PC-9 (cell line): ENCODE measurements at regions of chrX and their contacts with region 1.

Region 1: DNA sequence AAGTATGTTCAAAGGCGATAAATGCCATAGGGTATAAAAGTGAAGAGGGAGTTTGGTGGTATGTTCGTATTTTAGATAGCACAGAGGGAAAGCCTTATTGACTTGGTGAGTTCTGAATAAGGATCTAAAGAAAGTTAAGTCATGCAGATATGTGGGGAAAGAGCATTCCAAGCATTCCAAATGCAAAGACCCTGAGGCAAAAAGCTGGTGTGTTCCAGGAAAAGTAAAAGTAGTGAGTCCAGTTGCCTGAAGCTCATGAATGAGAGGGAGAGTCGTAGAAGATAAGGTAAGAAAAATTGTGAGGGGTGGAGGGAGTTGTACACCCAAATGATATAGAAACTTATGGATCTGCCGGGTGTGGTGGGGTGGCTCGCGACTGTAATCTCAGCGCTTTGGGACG is 426.7 kb downstream of the RPA4 start:
- DNase-seq: peak; percentile 46 to 71
- H3K4me3 ChIP-seq: no peak overlapping the region
- H3K27ac ChIP-seq: no peak overlapping the region
- H3K4me1 ChIP-seq: peaks cover 13% of the 10 kb centered on the region
- H3K27me3 ChIP-seq: no peaks in the 10 kb centered on the region
- CTCF ChIP-seq: no peak

Region 2: GRCh38 chrX:96979766-96980165 is 330.6 kb before region 1 on chrX:
- CTCF ChIA-PET with region 1: no interaction called
- POLR2A ChIA-PET with region 1: no interaction called
- intact Hi-C with region 1: no loop called
- DNase-seq: no peak
- H3K4me3 ChIP-seq: no peak overlapping the region
- H3K27ac ChIP-seq: no peak overlapping the region
- H3K4me1 ChIP-seq: no peaks in the 10 kb centered on the region
- H3K27me3 ChIP-seq: no peaks in the 10 kb centered on the region
- CTCF ChIP-seq: no peak

Region 3: DNA sequence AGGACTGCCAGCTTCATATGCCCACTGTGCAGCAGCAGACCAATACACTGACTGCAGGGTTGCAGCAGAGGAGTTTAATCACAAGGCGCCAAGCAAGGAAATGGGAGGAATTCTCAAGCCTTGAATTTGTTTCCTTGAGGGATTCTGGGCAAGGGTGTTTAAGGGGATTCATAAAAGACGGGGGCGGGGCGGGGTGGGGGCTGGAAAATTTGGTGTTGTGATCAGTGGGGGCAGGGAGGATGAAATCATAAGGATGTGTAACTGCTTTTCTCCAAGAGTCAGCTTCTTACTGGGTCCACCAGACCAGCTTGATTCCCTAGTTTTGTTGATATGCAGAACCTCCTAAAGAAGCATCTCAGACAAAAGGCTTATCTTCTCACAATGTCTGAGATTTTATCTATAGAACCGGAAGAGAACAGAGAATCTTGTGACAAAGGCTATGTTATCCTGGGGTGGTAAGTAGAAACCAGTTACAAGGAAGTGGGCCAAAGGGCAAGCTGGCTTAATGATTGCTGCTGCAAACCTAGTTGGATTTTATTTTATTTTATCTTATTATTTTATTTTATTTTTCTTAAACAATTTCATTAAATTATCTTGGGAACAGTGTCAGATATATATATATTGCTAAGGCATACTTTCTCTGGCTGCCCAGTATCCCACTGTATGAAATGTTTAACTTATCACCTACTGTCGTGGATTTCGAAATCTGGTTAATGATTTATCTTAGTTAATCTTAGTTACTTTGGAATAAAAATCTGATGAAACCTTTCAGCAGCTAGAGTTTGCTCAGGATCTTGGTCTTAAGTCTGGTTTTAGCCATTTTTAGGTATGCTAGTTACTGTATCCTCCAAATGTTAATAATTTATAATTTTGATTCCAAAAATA is 150.2 kb before region 1 on chrX:
- CTCF ChIA-PET with region 1: no interaction called
- POLR2A ChIA-PET with region 1: no interaction called
- intact Hi-C with region 1: no loop called
- DNase-seq: no peak
- H3K4me3 ChIP-seq: no peak overlapping the region
- H3K27ac ChIP-seq: no peak overlapping the region
- H3K4me1 ChIP-seq: no peaks in the 10 kb centered on the region
- H3K27me3 ChIP-seq: no peaks in the 10 kb centered on the region
- CTCF ChIP-seq: no peak

Region 4: GRCh38 chrX:97290199-97290598 is 20.2 kb before region 1 on chrX:
- CTCF ChIA-PET with region 1: no interaction called
- POLR2A ChIA-PET with region 1: interaction called, 11 read pairs
- intact Hi-C with region 1: no loop called
- DNase-seq: no peak
- H3K4me3 ChIP-seq: no peak overlapping the region
- H3K27ac ChIP-seq: no peak overlapping the region
- H3K4me1 ChIP-seq: no peaks in the 10 kb centered on the region
- H3K27me3 ChIP-seq: no peaks in the 10 kb centered on the region
- CTCF ChIP-seq: no peak